ENCODE measurements at regions of chr19 and their contacts with region 1.

Region 1: DNA sequence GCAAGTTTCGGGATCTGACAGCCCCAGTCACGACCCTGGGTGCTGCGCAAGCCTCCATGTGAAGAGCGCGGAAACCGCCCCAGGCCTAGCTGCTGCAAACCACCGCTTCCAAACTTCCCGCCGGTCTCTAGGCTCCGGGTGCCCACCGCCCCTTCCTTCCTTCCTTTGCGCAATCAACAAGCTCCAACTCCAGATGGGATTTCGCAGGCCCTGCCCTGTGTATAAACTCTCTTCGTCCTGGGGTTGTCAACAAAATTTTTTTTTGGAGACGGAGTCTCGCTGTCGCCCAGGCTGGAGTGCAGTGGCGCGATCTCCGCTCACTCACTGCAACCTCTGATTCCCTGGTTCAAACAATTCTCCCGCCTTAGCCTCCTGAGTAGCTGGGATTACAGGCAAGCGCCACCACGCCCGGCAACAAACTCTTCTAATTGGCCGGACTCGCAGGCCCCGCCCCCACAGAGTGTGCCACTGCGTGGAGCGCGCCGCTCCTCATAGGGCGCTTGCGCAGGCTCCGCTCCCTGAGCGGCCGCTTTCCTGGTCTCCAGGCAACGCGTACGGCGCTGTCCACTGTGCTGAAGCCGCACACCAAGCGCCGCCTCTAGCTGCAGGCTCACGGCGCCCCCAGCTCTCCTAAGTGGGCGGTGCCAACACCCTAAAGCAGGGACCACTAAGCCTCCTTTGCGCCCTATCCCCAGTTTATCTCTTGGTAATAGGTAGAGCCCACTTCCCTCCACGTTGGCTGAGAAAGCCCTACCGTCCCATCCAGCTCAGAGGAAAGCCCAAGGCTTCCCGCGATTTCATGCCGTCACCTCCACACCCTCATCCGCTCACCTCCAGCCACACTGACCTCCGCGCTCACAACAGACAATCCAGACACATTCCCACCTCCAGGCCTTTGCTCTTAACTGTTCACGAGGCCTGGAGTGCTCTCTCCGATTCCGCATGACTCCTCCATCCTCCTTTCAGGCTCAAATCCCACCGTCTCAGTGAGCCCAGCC is 5.5 kb upstream of the QTRT1 start:
- DNase-seq: peak; percentile 84 to 87 (median 85)
- H3K4me3 ChIP-seq: peak overlapping the region in 1 of 2 donors; percentile 49
- H3K4me3 Mint-ChIP-seq: peak overlapping the region; percentile 84 to 93 (median 90)
- H3K27ac ChIP-seq: no peak overlapping the region
- H3K27ac Mint-ChIP-seq: peak overlapping the region in 6 of 7 donors; percentile 42 to 94 (median 84)
- H3K4me1 ChIP-seq: peaks cover 12% of the 10 kb centered on the region
- H3K4me1 Mint-ChIP-seq: peaks cover 10 to 26% (median 16%) of the 10 kb centered on the region in 4 donors
- H3K27me3 ChIP-seq: no peaks in the 10 kb centered on the region
- H3K27me3 Mint-ChIP-seq: peaks cover 3 to 12% of the 10 kb centered on the region in 2 donors

Region 2: DNA sequence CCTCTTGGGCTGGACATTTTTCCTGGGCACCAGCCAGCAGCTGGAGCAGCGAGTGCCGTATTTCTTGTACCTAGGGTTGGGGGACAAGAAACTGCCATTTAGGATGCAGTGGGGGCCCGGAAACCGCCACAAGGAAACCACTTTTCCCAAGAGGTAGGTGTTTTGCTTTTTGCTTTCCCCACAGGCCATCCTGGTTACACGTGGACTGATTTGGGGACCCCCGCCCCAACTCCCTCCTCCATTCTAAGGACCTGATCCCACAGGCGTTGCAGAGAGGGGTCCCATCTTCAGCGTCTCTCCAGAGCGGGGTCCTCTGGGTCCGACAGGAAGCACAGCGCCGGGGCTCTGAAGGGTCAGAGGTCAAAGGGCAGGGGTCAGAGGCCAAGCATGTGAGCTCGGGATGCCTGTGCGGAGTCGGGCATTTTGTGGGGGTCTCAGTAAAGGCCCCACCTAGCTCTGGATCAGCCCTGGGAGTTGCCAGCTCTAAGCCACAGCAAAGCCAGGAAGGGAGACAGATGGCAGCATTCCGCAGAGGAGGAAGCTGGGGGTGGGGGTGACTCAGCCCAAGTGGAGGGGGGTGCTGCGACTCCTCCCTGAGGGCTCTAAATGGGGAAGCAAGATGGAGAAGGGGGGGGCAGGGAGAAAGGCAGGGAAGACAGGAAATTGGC is 390.4 kb before region 1 on chr19:
- CTCF ChIA-PET with region 1: no interaction called
- POLR2A ChIA-PET with region 1: no interaction called
- intact Hi-C with region 1: no loop called
- DNase-seq: no peak
- H3K4me3 ChIP-seq: no peak overlapping the region
- H3K4me3 Mint-ChIP-seq: no peak overlapping the region
- H3K27ac ChIP-seq: no peak overlapping the region
- H3K27ac Mint-ChIP-seq: no peak overlapping the region
- H3K4me1 ChIP-seq: no peaks in the 10 kb centered on the region
- H3K4me1 Mint-ChIP-seq: no peaks in the 10 kb centered on the region
- H3K27me3 ChIP-seq: no peaks in the 10 kb centered on the region
- H3K27me3 Mint-ChIP-seq: no peaks in the 10 kb centered on the region

Region 3: DNA sequence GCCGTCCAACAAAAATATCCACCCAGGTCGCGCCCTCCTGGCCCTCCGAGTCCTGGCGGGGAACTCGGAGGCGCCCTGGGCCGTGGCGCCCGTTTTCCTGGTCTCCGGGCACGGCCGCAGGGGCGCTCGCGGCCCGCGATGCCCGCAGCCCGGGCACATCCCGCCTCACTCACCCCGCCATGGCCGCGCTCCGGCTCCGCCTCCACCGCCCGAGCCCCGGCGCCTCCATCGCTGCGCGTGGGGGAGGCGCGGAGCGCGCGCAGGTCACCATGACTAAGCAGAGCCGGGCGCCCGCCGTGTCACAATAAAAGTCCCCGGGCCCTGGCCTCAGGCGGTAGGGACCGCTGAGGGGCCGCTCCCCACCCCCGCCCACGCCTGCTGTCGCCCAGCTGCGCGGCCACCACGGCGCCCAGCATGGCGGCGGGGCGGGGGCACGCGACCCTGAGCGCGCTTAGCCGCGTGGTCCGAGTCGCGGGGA is 193.1 kb before region 1 on chr19:
- CTCF ChIA-PET with region 1: no interaction called
- POLR2A ChIA-PET with region 1: no interaction called
- intact Hi-C with region 1: loop called (anchors 10 kb)
- DNase-seq: peak; percentile 83 to 88 (median 87)
- H3K4me3 ChIP-seq: peak overlapping the region; percentile 50 to 97
- H3K4me3 Mint-ChIP-seq: peak overlapping the region; percentile 84 to 90 (median 88)
- H3K27ac ChIP-seq: peak overlapping the region; percentile 87
- H3K27ac Mint-ChIP-seq: peak overlapping the region; percentile 81 to 94 (median 90)
- H3K4me1 ChIP-seq: peaks cover 47% of the 10 kb centered on the region
- H3K4me1 Mint-ChIP-seq: peaks cover 21 to 49% (median 35%) of the 10 kb centered on the region in 4 donors
- H3K27me3 ChIP-seq: no peaks in the 10 kb centered on the region
- H3K27me3 Mint-ChIP-seq: no peaks in the 10 kb centered on the region

Region 4: GRCh38 chr19:10565567-10566407 is 129.9 kb before region 1 on chr19 and contains the start of gene KRI1:
- CTCF ChIA-PET with region 1: no interaction called
- POLR2A ChIA-PET with region 1: interaction called, 5 read pairs
- intact Hi-C with region 1: loop called (anchors 5 kb)
- DNase-seq: peak; percentile 98 to 100 (median 99)
- H3K4me3 ChIP-seq: peak within 1 kb of the TSS; percentile 95 to 97
- H3K4me3 Mint-ChIP-seq: peak within 1 kb of the TSS; percentile 90 to 99 (median 98)
- H3K27ac ChIP-seq: peak within 1 kb of the TSS; percentile 94
- H3K27ac Mint-ChIP-seq: peak within 1 kb of the TSS; percentile 95 to 99 (median 98)
- H3K4me1 ChIP-seq: peaks cover 37% of the 10 kb centered on the region
- H3K4me1 Mint-ChIP-seq: peaks cover 22 to 50% (median 33%) of the 10 kb centered on the region in 4 donors
- H3K27me3 ChIP-seq: no peaks in the 10 kb centered on the region
- H3K27me3 Mint-ChIP-seq: no peaks in the 10 kb centered on the region
- total RNA-seq, gene KRI1: 72.7 to 73.0 TPM

Region 5: GRCh38 chr19:10602330-10603083 is 93.2 kb before region 1 on chr19:
- CTCF ChIA-PET with region 1: interaction called, 7 read pairs
- POLR2A ChIA-PET with region 1: interaction called, 21 read pairs
- intact Hi-C with region 1: no loop called
- DNase-seq: peak; percentile 82 to 84 (median 84)
- H3K4me3 ChIP-seq: peak overlapping the region; percentile 85 to 94
- H3K4me3 Mint-ChIP-seq: peak overlapping the region; percentile 98 to 99 (median 99)
- H3K27ac ChIP-seq: peak overlapping the region; percentile 96
- H3K27ac Mint-ChIP-seq: peak overlapping the region; percentile 99 to 100 (median 100)
- H3K4me1 ChIP-seq: peaks cover 29% of the 10 kb centered on the region
- H3K4me1 Mint-ChIP-seq: peaks cover 17 to 34% (median 21%) of the 10 kb centered on the region in 4 donors
- H3K27me3 ChIP-seq: no peaks in the 10 kb centered on the region
- H3K27me3 Mint-ChIP-seq: no peaks in the 10 kb centered on the region

Region 6: GRCh38 chr19:10636304-10636972 is 59.3 kb before region 1 on chr19:
- CTCF ChIA-PET with region 1: no interaction called
- POLR2A ChIA-PET with region 1: no interaction called
- intact Hi-C with region 1: no loop called
- DNase-seq: no peak
- H3K4me3 ChIP-seq: no peak overlapping the region
- H3K4me3 Mint-ChIP-seq: no peak overlapping the region
- H3K27ac ChIP-seq: no peak overlapping the region
- H3K27ac Mint-ChIP-seq: peak overlapping the region in 3 of 7 donors; percentile 50 to 69 (median 60)
- H3K4me1 ChIP-seq: no peaks in the 10 kb centered on the region
- H3K4me1 Mint-ChIP-seq: peaks cover 0 to 3% (median under 1%) of the 10 kb centered on the region in 4 donors
- H3K27me3 ChIP-seq: no peaks in the 10 kb centered on the region
- H3K27me3 Mint-ChIP-seq: no peaks in the 10 kb centered on the region

Region 7: DNA sequence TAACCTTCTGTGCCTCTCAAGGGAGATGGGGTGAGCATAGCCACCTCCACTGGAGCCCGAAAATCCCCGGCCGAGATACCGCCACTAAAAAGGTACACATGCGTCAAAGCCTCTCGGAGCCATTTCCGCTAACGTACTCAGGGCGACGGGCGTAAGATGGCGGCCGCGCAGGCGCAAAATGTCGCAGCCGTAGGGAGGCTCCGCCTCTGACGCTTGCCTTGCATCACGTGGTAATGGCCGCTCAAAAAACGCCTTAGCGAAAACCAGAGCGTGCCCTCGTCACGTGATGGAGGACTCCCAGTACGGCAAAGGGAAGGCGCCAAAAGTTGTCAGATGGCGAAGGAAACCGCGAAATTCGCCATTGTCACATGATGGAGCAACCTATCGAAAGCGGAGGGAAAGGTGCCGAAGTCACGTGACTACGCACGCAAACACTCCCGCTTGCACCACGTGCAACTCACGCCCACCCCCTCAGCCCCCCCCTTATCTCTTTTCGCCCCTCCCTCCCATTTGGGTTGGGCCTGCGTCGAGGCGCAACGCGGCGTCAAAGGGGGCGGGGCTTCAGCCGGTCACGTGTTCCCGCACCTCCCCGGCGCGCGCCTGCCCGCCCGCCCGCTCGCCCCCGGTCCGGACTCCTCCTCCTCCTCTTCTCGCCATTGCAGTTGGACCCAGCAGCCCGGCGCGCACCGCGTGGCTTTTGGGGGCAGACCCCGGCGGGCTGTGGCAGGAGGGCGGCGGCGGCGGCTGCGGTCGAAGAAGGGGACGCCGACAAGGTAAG is 41.8 kb before region 1 on chr19 and contains the start of gene ILF3:
- CTCF ChIA-PET with region 1: interaction called, 16 read pairs
- POLR2A ChIA-PET with region 1: interaction called, 11 read pairs
- intact Hi-C with region 1: loop called (anchors 1 kb)
- DNase-seq: peak; percentile 100
- H3K4me3 ChIP-seq: peak within 1 kb of the TSS; percentile 92 to 94
- H3K4me3 Mint-ChIP-seq: peak within 1 kb of the TSS; percentile 93 to 98 (median 96)
- H3K27ac ChIP-seq: peak within 1 kb of the TSS; percentile 100
- H3K27ac Mint-ChIP-seq: peak within 1 kb of the TSS; percentile 98 to 100 (median 99)
- H3K4me1 ChIP-seq: peaks cover 57% of the 10 kb centered on the region
- H3K4me1 Mint-ChIP-seq: peaks cover 24 to 58% (median 39%) of the 10 kb centered on the region in 4 donors
- H3K27me3 ChIP-seq: no peaks in the 10 kb centered on the region
- H3K27me3 Mint-ChIP-seq: peaks cover 0 to 4% of the 10 kb centered on the region in 2 donors
- total RNA-seq, gene ILF3: 291 to 302 TPM

Region 8: DNA sequence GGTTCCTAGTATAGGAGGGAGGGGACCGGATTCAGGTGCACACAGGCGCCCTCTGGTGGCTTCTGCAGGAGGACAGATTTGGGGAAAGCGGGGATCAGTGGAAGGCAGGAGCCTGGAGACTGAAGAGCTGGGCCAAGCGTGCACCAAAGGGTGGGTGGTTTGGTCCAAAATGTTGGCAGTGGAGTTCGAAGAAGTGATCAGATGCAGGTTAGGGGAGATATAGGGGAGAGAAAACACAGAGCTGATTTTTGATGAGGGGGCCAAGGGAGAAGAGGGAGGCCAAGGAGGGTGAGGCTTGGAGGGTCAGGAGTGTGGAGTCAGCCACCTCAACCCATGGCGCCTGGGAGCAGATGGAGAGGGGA is 168.8 kb after region 1 on chr19:
- CTCF ChIA-PET with region 1: interaction called, 46 read pairs
- POLR2A ChIA-PET with region 1: no interaction called
- intact Hi-C with region 1: no loop called
- DNase-seq: peak; percentile 72 to 76 (median 74)
- H3K4me3 ChIP-seq: no peak overlapping the region
- H3K4me3 Mint-ChIP-seq: peak overlapping the region in 3 of 8 donors; percentile 41 to 64 (median 59)
- H3K27ac ChIP-seq: no peak overlapping the region
- H3K27ac Mint-ChIP-seq: peak overlapping the region in 6 of 7 donors; percentile 3 to 87 (median 45)
- H3K4me1 ChIP-seq: peaks cover 9% of the 10 kb centered on the region
- H3K4me1 Mint-ChIP-seq: peaks cover 5 to 19% (median 14%) of the 10 kb centered on the region in 4 donors
- H3K27me3 ChIP-seq: no peaks in the 10 kb centered on the region
- H3K27me3 Mint-ChIP-seq: no peaks in the 10 kb centered on the region